CD8-positive, alpha-beta T cell (primary cell): ENCODE measurements at regions of chr10 and their contacts with region 1.

Region 1: DNA sequence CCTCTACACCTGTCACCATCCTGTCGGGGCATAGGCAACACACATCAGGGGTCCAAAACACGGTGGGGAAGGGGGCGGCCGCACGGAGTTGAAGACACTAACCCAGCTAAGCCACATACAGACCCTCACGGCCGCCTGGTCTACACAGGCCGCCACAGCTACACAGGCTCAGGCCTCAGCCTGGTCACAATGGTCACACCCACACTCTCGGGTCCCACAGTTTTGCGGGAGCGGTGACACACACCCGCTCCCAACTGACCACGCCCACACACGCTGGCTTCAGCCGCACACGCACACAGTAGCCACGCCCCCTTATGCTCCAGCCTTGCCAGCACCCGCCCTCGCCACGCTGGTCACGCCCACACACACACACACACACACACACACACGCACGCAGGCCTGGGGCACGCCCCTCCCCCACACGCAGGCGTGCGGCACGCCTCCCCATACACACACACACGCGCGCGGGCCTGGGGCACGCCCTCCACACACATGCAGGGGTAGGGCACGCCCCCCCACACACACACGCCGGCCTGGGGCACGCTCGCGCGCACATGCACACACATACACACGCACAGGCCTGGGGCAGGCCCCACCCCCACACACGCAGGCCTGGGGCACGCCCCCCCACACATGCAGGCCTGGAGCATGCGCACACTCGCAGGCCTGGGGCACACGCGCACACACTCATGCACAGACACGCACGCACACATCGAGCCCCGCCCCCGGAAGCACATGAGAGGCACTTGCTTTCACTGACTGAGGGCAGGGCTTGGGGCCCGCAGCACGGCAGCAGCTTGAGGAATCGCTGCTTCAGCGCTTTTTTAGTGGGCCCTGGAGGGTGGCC is 12.3 kb upstream of the OGA start:
- DNase-seq: peak; percentile 84 to 98 (median 93)
- ATAC-seq: peak; percentile 74
- H3K4me3 ChIP-seq: peak overlapping the region; percentile 49 to 51
- H3K4me3 Mint-ChIP-seq: peak overlapping the region; percentile 87
- H3K27ac ChIP-seq: peak overlapping the region; percentile 66 to 84
- H3K27ac Mint-ChIP-seq: peak overlapping the region; percentile 97
- H3K4me1 ChIP-seq: peaks cover 40% of the 10 kb centered on the region
- H3K4me1 Mint-ChIP-seq: peaks cover 47% of the 10 kb centered on the region
- H3K27me3 ChIP-seq: no peaks in the 10 kb centered on the region
- H3K27me3 Mint-ChIP-seq: no peaks in the 10 kb centered on the region
- CTCF ChIP-seq: no peak

Region 2: GRCh38 chr10:100878291-100878910 is 952.1 kb before region 1 on chr10:
- CTCF ChIA-PET with region 1: no interaction called
- POLR2A ChIA-PET with region 1: no interaction called
- intact Hi-C with region 1: no loop called
- DNase-seq: peak in 3 of 9 experiments; percentile 13 to 47 (median 32)
- ATAC-seq: peak; percentile 62
- H3K4me3 ChIP-seq: no peak overlapping the region
- H3K4me3 Mint-ChIP-seq: no peak overlapping the region
- H3K27ac ChIP-seq: no peak overlapping the region
- H3K27ac Mint-ChIP-seq: no peak overlapping the region
- H3K4me1 ChIP-seq: no peaks in the 10 kb centered on the region
- H3K4me1 Mint-ChIP-seq: no peaks in the 10 kb centered on the region
- H3K27me3 ChIP-seq: no peaks in the 10 kb centered on the region
- H3K27me3 Mint-ChIP-seq: peaks cover 13% of the 10 kb centered on the region
- CTCF ChIP-seq: no peak

Region 3: DNA sequence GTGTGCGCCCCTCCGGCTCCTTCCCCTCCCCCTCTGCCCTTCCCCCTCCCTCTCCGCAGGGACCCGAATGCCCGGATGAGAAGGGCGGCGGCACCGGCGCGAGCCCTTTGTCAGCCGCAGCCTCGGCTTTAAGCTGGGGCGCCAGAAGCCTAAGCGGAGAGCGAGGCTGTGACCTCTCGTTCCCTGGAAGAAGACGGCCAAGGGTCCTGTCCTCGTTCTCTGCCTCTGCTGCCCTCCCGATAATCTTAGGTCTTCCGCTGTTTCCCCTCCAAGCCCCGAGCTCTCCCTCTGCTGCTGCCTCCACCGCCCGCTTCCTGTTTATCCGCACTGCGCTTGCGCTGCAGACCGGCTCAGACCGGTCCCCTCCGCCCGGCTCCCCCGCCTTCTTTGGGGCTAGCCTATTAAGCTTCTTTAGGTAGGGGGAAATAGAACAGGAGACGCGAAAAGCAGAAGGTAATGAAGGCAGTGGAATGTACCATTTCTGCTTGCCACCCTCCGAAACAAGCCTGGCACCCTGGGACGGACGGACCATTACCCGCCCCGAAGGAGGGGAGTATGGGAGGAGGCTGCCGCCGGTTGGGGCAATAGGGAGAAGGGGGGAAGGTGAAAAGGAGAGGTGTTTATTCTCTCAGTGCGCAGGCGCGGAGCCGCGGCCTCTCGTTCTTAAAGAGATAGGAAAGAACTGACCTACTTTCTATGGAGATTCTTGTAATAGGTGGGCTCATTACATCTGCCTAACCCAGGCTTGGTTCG is 12.2 kb before region 1 on chr10 and contains the start of gene OGA:
- CTCF ChIA-PET with region 1: interaction called, 29 read pairs
- POLR2A ChIA-PET with region 1: interaction called, 64 read pairs
- intact Hi-C with region 1: loop called (anchors 1 kb)
- DNase-seq: peak; percentile 94 to 100 (median 98)
- ATAC-seq: peak; percentile 90
- H3K4me3 ChIP-seq: peak within 1 kb of the TSS; percentile 78 to 82
- H3K4me3 Mint-ChIP-seq: peak within 1 kb of the TSS; percentile 98
- H3K27ac ChIP-seq: peak within 1 kb of the TSS; percentile 81 to 90
- H3K27ac Mint-ChIP-seq: peak within 1 kb of the TSS; percentile 97
- H3K4me1 ChIP-seq: peaks cover 32% of the 10 kb centered on the region
- H3K4me1 Mint-ChIP-seq: peaks cover 51% of the 10 kb centered on the region
- H3K27me3 ChIP-seq: no peaks in the 10 kb centered on the region
- H3K27me3 Mint-ChIP-seq: no peaks in the 10 kb centered on the region
- CTCF ChIP-seq: no peak
- total RNA-seq, gene OGA: 356 to 394 TPM

Region 4: DNA sequence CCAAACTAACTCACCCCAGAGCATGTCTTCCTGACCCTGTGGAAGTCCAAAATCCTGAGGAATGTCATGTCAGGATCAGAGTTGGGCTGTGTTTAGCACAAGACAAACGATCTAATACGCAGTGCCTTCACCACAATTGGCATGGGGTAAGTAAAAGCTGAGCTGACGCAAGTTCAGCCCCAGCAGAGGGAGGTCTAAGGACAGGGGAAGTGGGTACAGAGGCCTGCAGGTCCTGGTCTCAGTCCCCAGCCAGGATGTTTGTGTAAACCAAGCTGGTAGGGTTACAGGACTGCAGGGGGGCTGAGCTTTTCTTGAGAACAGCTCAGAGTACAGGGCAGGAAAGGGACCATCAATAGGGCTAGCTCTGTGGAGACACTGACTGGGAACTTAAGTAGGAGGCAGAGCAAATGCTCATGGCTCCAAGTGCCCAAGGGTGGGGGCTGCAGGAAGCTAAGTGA is 18.4 kb after region 1 on chr10:
- CTCF ChIA-PET with region 1: interaction called, 43 read pairs
- POLR2A ChIA-PET with region 1: no interaction called
- intact Hi-C with region 1: no loop called
- DNase-seq: no peak
- ATAC-seq: no peak
- H3K4me3 ChIP-seq: no peak overlapping the region
- H3K4me3 Mint-ChIP-seq: no peak overlapping the region
- H3K27ac ChIP-seq: no peak overlapping the region
- H3K27ac Mint-ChIP-seq: no peak overlapping the region
- H3K4me1 ChIP-seq: peaks cover 8% of the 10 kb centered on the region
- H3K4me1 Mint-ChIP-seq: peaks cover 6% of the 10 kb centered on the region
- H3K27me3 ChIP-seq: no peaks in the 10 kb centered on the region
- H3K27me3 Mint-ChIP-seq: peaks cover 3% of the 10 kb centered on the region
- CTCF ChIP-seq: no peak

Region 5: DNA sequence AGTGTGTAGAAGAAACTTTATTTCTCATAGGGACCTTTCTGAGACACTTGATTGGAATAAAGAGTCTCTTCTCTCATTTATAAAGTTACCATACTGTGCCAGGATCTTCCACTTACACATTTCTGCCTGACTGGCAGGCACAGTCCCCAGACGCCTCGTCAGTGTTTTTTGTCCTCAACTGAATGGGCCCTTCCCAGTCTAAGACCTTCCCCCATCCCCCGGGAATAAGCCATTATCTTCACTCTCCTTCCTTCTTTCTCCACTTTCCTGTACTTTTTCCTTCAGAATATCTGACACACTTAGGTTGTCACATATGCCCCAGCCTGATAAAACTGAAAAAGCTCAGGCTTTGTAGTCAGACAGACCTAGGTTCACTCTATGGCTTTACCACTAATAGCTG is 48.3 kb after region 1 on chr10:
- CTCF ChIA-PET with region 1: no interaction called
- POLR2A ChIA-PET with region 1: no interaction called
- intact Hi-C with region 1: no loop called
- DNase-seq: no peak
- ATAC-seq: no peak
- H3K4me3 ChIP-seq: no peak overlapping the region
- H3K4me3 Mint-ChIP-seq: no peak overlapping the region
- H3K27ac ChIP-seq: no peak overlapping the region
- H3K27ac Mint-ChIP-seq: no peak overlapping the region
- H3K4me1 ChIP-seq: peaks cover 8% of the 10 kb centered on the region
- H3K4me1 Mint-ChIP-seq: peaks cover 16% of the 10 kb centered on the region
- H3K27me3 ChIP-seq: no peaks in the 10 kb centered on the region
- H3K27me3 Mint-ChIP-seq: no peaks in the 10 kb centered on the region
- CTCF ChIP-seq: no peak

Region 6: DNA sequence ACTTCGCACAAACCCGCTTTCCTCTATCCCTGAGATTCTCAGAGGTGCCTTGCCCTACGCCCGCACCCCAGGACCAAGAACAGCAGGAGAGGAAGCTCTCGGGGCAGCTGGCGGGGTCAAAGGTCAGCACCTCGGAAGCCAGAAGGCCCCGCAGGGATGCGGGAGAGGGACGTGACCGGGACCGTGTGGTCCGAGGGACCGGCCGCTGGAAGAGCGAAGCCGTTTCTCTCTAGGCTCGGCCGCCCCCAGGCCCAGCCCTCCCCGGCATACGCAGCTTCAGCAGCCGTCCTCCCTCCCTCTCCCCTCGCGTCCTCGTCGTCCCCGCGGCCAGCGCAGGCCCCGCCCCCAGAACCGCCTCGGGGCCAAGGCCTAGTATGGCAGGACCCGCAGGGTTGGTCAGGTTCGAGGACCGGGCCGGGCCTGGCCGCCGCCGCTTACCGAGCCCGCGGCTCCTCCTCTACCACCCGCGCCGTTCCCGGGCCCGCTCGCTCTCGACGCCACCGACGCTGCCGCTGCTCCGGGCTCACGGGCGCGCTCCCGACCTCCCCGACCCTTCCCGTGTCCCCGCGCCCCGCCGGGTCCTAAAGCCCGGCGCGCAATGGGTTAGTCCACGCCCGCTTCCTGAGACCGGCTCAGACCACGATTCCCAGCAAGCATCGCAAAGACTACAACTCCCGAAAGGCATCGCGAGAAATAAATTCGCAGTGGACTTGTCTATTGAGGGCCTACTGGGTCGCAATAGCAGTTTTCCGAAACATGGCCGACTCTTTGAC is 225.3 kb after region 1 on chr10 and contains the start of gene ARMH3:
- CTCF ChIA-PET with region 1: no interaction called
- POLR2A ChIA-PET with region 1: no interaction called
- intact Hi-C with region 1: loop called in 1 of 2 experiments (anchors 5 kb)
- DNase-seq: peak; percentile 75 to 95 (median 87)
- ATAC-seq: peak; percentile 93
- H3K4me3 ChIP-seq: peak within 1 kb of the TSS; percentile 93 to 94
- H3K4me3 Mint-ChIP-seq: peak within 1 kb of the TSS; percentile 97
- H3K27ac ChIP-seq: peak within 1 kb of the TSS; percentile 79 to 90
- H3K27ac Mint-ChIP-seq: peak within 1 kb of the TSS; percentile 95
- H3K4me1 ChIP-seq: peaks cover 40% of the 10 kb centered on the region
- H3K4me1 Mint-ChIP-seq: peaks cover 42% of the 10 kb centered on the region
- H3K27me3 ChIP-seq: no peaks in the 10 kb centered on the region
- H3K27me3 Mint-ChIP-seq: no peaks in the 10 kb centered on the region
- CTCF ChIP-seq: no peak
- total RNA-seq, gene ARMH3: 18.6 to 20.6 TPM